CD8-positive, alpha-beta memory T cell (primary cell): ENCODE measurements at regions of chr20 and their contacts with region 1.

Region 1: GRCh38 chr20:62010551-62011402 is 54.9 kb downstream of the TAF4 start:
- DNase-seq: peak; percentile 45 to 80 (median 56)
- H3K4me3 ChIP-seq: no peak overlapping the region
- H3K4me3 Mint-ChIP-seq: no peak overlapping the region
- H3K27ac ChIP-seq: no peak overlapping the region
- H3K27ac Mint-ChIP-seq: peak overlapping the region in 4 of 8 donors; percentile 12 to 58 (median 30)
- H3K4me1 ChIP-seq: peaks cover 4% of the 10 kb centered on the region
- H3K4me1 Mint-ChIP-seq: peaks cover 16 to 24% (median 20%) of the 10 kb centered on the region in 3 donors
- H3K27me3 ChIP-seq: no peaks in the 10 kb centered on the region
- H3K27me3 Mint-ChIP-seq: no peaks in the 10 kb centered on the region

Region 2: DNA sequence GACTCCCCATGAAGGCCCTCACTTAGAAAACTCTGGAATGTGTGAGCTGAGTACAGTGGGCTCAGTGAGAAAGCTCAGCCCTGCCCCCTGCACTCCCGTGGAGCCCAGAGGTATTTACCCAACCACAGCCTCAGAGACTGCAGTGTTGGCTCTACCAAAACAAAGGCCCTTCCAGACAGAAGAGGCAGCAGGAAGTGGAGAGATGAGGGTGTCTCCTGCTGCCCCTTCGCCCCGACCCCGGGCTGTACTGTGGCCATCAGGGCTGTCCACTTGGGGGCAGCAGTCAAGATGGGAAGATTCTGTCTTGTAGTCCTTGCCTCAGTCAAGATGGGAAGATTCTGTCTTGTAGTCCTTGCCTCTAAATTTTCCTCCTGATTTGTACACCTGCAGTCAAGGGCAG is 286.4 kb before region 1 on chr20:
- CTCF ChIA-PET with region 1: no interaction called
- POLR2A ChIA-PET with region 1: no interaction called
- DNase-seq: no peak
- H3K4me3 ChIP-seq: no peak overlapping the region
- H3K4me3 Mint-ChIP-seq: no peak overlapping the region
- H3K27ac ChIP-seq: no peak overlapping the region
- H3K27ac Mint-ChIP-seq: no peak overlapping the region
- H3K4me1 ChIP-seq: peaks cover 6% of the 10 kb centered on the region
- H3K4me1 Mint-ChIP-seq: peaks cover 4 to 11% (median 7%) of the 10 kb centered on the region in 3 donors
- H3K27me3 ChIP-seq: no peaks in the 10 kb centered on the region
- H3K27me3 Mint-ChIP-seq: peaks cover 0 to 3% of the 10 kb centered on the region in 2 donors

Region 3: GRCh38 chr20:61998343-61999121 is 12.2 kb before region 1 on chr20:
- CTCF ChIA-PET with region 1: no interaction called
- POLR2A ChIA-PET with region 1: no interaction called
- DNase-seq: no peak
- H3K4me3 ChIP-seq: no peak overlapping the region
- H3K4me3 Mint-ChIP-seq: no peak overlapping the region
- H3K27ac ChIP-seq: no peak overlapping the region
- H3K27ac Mint-ChIP-seq: peak overlapping the region in 1 of 8 donors; percentile 18
- H3K4me1 ChIP-seq: no peaks in the 10 kb centered on the region
- H3K4me1 Mint-ChIP-seq: no peaks in the 10 kb centered on the region
- H3K27me3 ChIP-seq: no peaks in the 10 kb centered on the region
- H3K27me3 Mint-ChIP-seq: no peaks in the 10 kb centered on the region

Region 4: GRCh38 chr20:62136283-62137091 is 125.7 kb after region 1 on chr20:
- CTCF ChIA-PET with region 1: interaction called, 60 read pairs
- POLR2A ChIA-PET with region 1: no interaction called
- DNase-seq: peak; percentile 54 to 83 (median 66)
- H3K4me3 ChIP-seq: no peak overlapping the region
- H3K4me3 Mint-ChIP-seq: peak overlapping the region in 1 of 7 donors; percentile 49
- H3K27ac ChIP-seq: no peak overlapping the region
- H3K27ac Mint-ChIP-seq: peak overlapping the region; percentile 71 to 96 (median 90)
- H3K4me1 ChIP-seq: peaks cover 13% of the 10 kb centered on the region
- H3K4me1 Mint-ChIP-seq: peaks cover 32 to 55% (median 44%) of the 10 kb centered on the region in 3 donors
- H3K27me3 ChIP-seq: no peaks in the 10 kb centered on the region
- H3K27me3 Mint-ChIP-seq: no peaks in the 10 kb centered on the region

Region 5: GRCh38 chr20:62156592-62157386 is 146.0 kb after region 1 on chr20:
- CTCF ChIA-PET with region 1: interaction called, 12 read pairs
- POLR2A ChIA-PET with region 1: no interaction called
- DNase-seq: peak; percentile 57 to 82 (median 66)
- H3K4me3 ChIP-seq: no peak overlapping the region
- H3K4me3 Mint-ChIP-seq: no peak overlapping the region
- H3K27ac ChIP-seq: no peak overlapping the region
- H3K27ac Mint-ChIP-seq: peak overlapping the region in 1 of 8 donors; percentile 38
- H3K4me1 ChIP-seq: no peaks in the 10 kb centered on the region
- H3K4me1 Mint-ChIP-seq: peaks cover 12 to 33% (median 19%) of the 10 kb centered on the region in 3 donors
- H3K27me3 ChIP-seq: no peaks in the 10 kb centered on the region
- H3K27me3 Mint-ChIP-seq: no peaks in the 10 kb centered on the region